Gastrocnemius medialis (tissue), 4 donors: ENCODE measurements at regions of chr6 and their contacts with region 1.

Region 1: GRCh38 chr6:43247113-43247999 is 4.1 kb downstream of the TTBK1 start:
- DNase-seq: peak; percentile 55 to 63
- ATAC-seq: peak; percentile 93 to 94
- H3K4me3 ChIP-seq: peak overlapping the region; percentile 57 to 68 (median 62)
- H3K27ac ChIP-seq: peak overlapping the region in 3 of 4 donors; percentile 47 to 58 (median 54)
- H3K4me1 ChIP-seq: peaks cover 0 to 12% of the 10 kb centered on the region in 2 donors
- H3K27me3 ChIP-seq: peaks cover 18 to 21% (median 20%) of the 10 kb centered on the region in 3 donors
- CTCF ChIP-seq: no peak
- POLR2A ChIP-seq: no peak

Region 2: DNA sequence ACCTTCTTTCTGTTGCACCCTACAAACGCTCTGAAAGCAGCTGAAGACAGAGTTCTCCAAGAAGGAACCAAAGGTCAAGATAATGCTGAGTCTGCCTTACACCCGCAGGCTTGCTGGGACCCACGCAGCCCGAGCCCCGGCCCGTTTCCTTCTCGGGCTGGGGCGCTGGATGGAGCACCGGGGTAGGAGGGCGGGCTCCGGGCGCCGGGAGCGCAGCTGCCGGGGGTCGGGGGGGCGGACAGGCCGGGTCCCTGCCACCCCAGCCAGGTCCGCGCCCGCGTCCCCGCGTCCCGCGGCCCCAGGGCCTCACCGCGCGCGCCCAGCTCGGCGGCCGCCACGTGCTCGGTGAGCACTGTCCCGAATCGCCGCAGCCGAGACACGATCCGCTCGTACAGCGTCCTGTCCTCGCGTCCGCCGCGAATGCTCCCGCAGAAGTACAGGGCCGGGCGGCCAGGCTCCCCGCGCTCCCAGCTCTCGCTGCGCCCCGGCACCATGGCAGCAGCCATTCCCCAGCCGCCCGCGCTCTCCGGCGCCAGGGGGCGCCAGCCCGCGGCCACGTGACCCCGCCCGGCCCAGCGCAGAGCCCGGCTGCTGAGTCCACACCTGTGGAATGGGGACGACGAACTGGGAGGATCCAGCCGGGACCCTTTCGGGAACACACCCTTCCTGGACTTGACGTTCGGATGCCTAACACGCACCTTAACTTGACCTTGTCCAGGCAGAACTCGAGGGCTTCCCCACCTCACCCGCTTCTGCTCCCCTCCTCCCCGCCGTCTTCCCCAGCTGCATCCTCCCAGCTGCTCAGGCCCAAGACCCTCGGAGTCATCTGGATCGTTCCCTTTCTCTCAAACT is 18.2 kb before region 1 on chr6 and contains the start of gene DNPH1:
- in situ Hi-C with region 1: no loop called
- intact Hi-C with region 1: loop called (anchors 1 kb)
- DNase-seq: peak; percentile 47 to 63
- ATAC-seq: peak; percentile 95 to 96
- H3K4me3 ChIP-seq: peak within 1 kb of the TSS; percentile 57 to 74 (median 65)
- H3K27ac ChIP-seq: peak within 1 kb of the TSS; percentile 47 to 68 (median 60)
- H3K4me1 ChIP-seq: peaks cover 4 to 6% of the 10 kb centered on the region in 2 donors
- H3K27me3 ChIP-seq: no peaks in the 10 kb centered on the region
- CTCF ChIP-seq: peak; percentile 67 to 94 (median 89)
- POLR2A ChIP-seq: no peak
- total RNA-seq, gene DNPH1: 42.3 to 87.6 (median 69.2) TPM